Activated CD8-positive, alpha-beta T cell treated with anti-CD3 and anti-CD28 coated beads for 36 hours (primary cell): ENCODE measurements at regions of chr11 and their contacts with region 1.

Region 1: GRCh38 chr11:65497141-65498041 is 1.5 kb upstream of the MALAT1 start:
- DNase-seq: peak; percentile 99
- ATAC-seq: peak; percentile 77
- H3K4me3 Mint-ChIP-seq: no peak overlapping the region
- H3K27ac Mint-ChIP-seq: no peak overlapping the region
- H3K4me1 Mint-ChIP-seq: peaks cover 33% of the 10 kb centered on the region
- H3K27me3 Mint-ChIP-seq: no peaks in the 10 kb centered on the region
- CTCF ChIP-seq: no peak

Region 2: GRCh38 chr11:65370659-65371049 is 126.7 kb before region 1 on chr11:
- CTCF ChIA-PET with region 1: no interaction called
- POLR2A ChIA-PET with region 1: interaction called, 13 read pairs
- intact Hi-C with region 1: no loop called
- DNase-seq: no peak
- ATAC-seq: no peak
- H3K4me3 Mint-ChIP-seq: no peak overlapping the region
- H3K27ac Mint-ChIP-seq: no peak overlapping the region
- H3K4me1 Mint-ChIP-seq: no peaks in the 10 kb centered on the region
- H3K27me3 Mint-ChIP-seq: no peaks in the 10 kb centered on the region
- CTCF ChIP-seq: no peak

Region 3: GRCh38 chr11:65425105-65425970 is 72.1 kb before region 1 on chr11:
- CTCF ChIA-PET with region 1: interaction called, 448 read pairs
- POLR2A ChIA-PET with region 1: interaction called, 4,842 read pairs
- intact Hi-C with region 1: loop called (anchors 2 kb)
- DNase-seq: peak; percentile 90
- ATAC-seq: peak; percentile 32
- H3K4me3 Mint-ChIP-seq: peak overlapping the region; percentile 89
- H3K27ac Mint-ChIP-seq: peak overlapping the region; percentile 98
- H3K4me1 Mint-ChIP-seq: peaks cover 41% of the 10 kb centered on the region
- H3K27me3 Mint-ChIP-seq: peaks cover 8% of the 10 kb centered on the region
- CTCF ChIP-seq: no peak

Region 4: DNA sequence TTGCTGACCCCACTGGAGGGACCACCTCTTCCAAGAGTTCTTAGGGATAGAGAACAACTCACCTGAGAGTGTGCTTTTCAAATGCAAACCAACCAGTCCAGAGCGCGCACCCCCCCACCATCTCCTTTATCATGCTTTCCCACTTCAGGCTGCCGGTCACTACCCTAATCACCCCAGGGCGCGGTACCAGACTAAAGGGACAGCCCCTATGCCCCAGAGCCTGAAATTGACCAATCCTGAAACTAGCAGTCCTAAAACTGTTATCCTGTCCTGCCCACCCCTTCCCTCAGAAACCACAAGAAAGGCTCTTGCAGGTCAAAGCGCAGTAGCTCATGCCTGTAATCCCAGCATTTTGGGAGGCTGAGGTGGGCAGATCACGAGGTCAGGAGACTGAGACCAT is 37.8 kb before region 1 on chr11:
- CTCF ChIA-PET with region 1: no interaction called
- POLR2A ChIA-PET with region 1: interaction called, 14 read pairs
- intact Hi-C with region 1: no loop called
- DNase-seq: no peak
- ATAC-seq: no peak
- H3K4me3 Mint-ChIP-seq: no peak overlapping the region
- H3K27ac Mint-ChIP-seq: no peak overlapping the region
- H3K4me1 Mint-ChIP-seq: peaks cover 22% of the 10 kb centered on the region
- H3K27me3 Mint-ChIP-seq: no peaks in the 10 kb centered on the region
- CTCF ChIP-seq: no peak

Region 5: GRCh38 chr11:65516135-65516935 is 18.9 kb after region 1 on chr11:
- CTCF ChIA-PET with region 1: interaction called, 60 read pairs
- POLR2A ChIA-PET with region 1: interaction called, 259 read pairs
- intact Hi-C with region 1: no loop called
- DNase-seq: no peak
- ATAC-seq: peak; percentile 57
- H3K4me3 Mint-ChIP-seq: no peak overlapping the region
- H3K27ac Mint-ChIP-seq: peak overlapping the region; percentile 31
- H3K4me1 Mint-ChIP-seq: peaks cover 11% of the 10 kb centered on the region
- H3K27me3 Mint-ChIP-seq: no peaks in the 10 kb centered on the region
- CTCF ChIP-seq: no peak

Region 6: DNA sequence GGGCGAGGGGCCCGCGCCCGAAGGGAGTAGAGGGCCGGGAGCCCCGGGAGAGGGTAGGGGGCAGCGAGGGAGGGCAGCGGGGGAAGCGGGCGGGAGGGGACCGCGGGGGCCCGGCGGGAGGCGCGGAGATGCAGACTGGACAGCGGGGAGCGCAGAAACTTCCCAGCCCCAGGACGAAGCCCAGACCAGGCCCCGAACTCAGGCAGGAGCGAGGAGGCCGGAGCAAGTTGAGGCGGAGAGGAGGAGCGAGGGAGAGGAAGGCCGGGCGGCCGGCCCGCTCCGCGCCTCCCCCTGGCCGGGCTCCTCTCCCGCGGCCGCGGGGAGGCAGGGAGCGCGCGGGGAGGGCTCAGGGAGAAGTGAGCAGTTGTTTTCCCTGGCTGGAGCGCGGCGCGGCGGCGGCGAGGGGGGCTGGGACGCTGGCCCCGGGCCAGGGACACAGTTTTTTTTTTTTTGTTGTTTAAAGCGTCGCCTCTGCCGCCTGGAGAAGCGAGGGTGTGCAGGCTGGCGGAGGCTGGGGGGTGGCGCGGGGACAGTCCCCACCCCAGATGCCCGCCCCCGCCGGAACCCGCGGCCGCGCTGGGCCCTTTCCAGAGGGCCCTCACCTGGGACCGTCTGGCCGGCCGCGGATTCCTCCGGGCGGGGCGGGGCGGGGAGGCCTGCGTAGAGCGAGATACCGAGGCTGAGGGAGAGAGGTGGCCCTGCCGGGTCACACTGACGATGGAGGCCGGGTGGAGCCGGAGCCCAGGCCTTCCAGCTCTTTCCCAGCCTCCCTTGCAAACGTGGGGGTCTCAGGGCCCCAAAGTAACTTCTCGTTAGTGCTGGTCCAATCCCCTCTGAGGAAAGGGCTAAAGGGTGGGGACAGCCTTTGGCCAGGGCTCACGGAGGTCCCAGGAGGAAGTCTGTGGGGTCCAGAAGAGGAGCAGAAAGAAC is 60.9 kb after region 1 on chr11 and contains the start of gene LTBP3:
- CTCF ChIA-PET with region 1: no interaction called
- POLR2A ChIA-PET with region 1: interaction called, 20 read pairs
- intact Hi-C with region 1: no loop called
- DNase-seq: peak; percentile 63
- ATAC-seq: peak; percentile 24
- H3K4me3 Mint-ChIP-seq: peak within 1 kb of the TSS; percentile 87
- H3K27ac Mint-ChIP-seq: peak within 1 kb of the TSS; percentile 90
- H3K4me1 Mint-ChIP-seq: peaks cover 60% of the 10 kb centered on the region
- H3K27me3 Mint-ChIP-seq: no peaks in the 10 kb centered on the region
- CTCF ChIP-seq: no peak
- total RNA-seq, gene LTBP3: 55.4 to 56.0 TPM

Region 7: DNA sequence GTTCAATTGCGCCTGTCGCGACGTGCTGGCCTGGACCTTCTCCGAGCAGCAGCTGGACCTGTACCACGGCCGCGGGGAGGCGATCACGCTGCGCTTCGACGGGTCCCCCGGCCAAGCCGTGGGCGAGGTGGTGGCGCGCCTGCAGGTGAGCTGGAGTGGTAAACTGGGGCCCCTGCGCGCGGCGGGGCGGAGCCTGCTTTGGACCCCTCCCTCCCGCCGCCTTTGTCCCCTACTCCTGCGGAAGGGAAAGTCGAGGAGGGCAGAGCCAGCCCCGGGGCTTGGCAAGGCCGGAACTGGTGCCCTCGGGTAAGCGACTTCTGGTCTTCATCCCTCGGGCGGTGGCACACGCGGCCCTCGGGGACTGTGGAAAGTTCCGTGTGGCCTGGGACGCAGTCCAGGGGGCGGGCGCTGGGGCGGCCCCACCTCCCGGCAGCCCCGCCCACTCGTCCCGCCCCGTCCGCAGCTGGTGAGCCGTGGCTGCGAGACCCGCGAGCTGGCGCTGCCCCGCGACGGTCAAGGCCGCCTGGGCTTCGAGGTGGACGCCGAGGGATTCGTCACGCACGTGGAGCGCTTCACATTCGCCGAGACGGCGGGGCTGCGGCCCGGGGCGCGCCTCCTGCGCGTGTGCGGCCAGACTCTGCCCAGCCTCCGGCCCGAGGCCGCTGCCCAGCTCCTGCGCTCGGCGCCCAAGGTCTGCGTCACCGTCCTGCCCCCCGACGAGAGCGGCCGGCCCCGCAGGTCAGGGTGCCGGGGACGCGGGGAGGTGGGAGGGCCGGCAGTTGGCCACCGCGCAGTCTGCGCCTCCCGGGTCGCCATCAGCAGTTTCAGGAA is 149.7 kb after region 1 on chr11:
- CTCF ChIA-PET with region 1: no interaction called
- POLR2A ChIA-PET with region 1: no interaction called
- intact Hi-C with region 1: no loop called
- DNase-seq: no peak
- ATAC-seq: no peak
- H3K4me3 Mint-ChIP-seq: no peak overlapping the region
- H3K27ac Mint-ChIP-seq: no peak overlapping the region
- H3K4me1 Mint-ChIP-seq: peaks cover 29% of the 10 kb centered on the region
- H3K27me3 Mint-ChIP-seq: no peaks in the 10 kb centered on the region
- CTCF ChIP-seq: no peak